PC-9 (cell line): ENCODE measurements at regions of chr1 and their contacts with region 1.

Region 1: GRCh38 chr1:221470000-221470698 is 271.7 kb downstream of the DUSP10 start:
- DNase-seq: peak in 1 of 2 experiments; percentile 77
- H3K4me3 ChIP-seq: no peak overlapping the region
- H3K27ac ChIP-seq: no peak overlapping the region
- H3K4me1 ChIP-seq: no peaks in the 10 kb centered on the region
- H3K27me3 ChIP-seq: no peaks in the 10 kb centered on the region
- CTCF ChIP-seq: no peak

Region 2: DNA sequence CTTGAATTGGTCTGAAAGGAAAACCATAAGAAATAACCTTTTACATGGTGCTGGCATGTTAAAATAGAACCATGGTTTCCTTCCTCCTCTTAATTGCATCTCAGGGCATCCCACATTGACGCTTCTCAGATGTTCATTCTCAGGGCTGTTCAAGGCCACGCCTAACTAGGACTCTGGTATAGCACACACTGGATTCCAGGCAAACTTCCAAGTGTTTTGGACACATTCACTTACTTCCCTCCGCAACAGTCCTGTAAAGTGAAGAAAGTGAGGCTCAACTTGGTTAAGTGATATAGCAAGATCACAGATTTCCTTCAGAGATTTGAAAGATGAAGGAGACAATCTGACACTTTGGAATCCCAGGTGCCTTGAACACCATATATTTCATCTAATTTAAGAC is 26.9 kb after region 1 on chr1:
- CTCF ChIA-PET with region 1: no interaction called
- POLR2A ChIA-PET with region 1: no interaction called
- intact Hi-C with region 1: no loop called
- DNase-seq: no peak
- H3K4me3 ChIP-seq: no peak overlapping the region
- H3K27ac ChIP-seq: no peak overlapping the region
- H3K4me1 ChIP-seq: no peaks in the 10 kb centered on the region
- H3K27me3 ChIP-seq: no peaks in the 10 kb centered on the region
- CTCF ChIP-seq: no peak

Region 3: GRCh38 chr1:222124602-222125001 is 654.5 kb after region 1 on chr1:
- CTCF ChIA-PET with region 1: interaction called, 11 read pairs
- POLR2A ChIA-PET with region 1: no interaction called
- intact Hi-C with region 1: no loop called
- DNase-seq: no peak
- H3K4me3 ChIP-seq: no peak overlapping the region
- H3K27ac ChIP-seq: no peak overlapping the region
- H3K4me1 ChIP-seq: no peaks in the 10 kb centered on the region
- H3K27me3 ChIP-seq: no peaks in the 10 kb centered on the region
- CTCF ChIP-seq: 0 out of 2 replicates have a peak, but pooled peaks have one; percentile 30